K562 (cell line): ENCODE measurements at regions of chr15 and their contacts with region 1.

Region 1: GRCh38 chr15:84826369-84826823 is 9.2 kb downstream of the ALPK3 start:
- DNase-seq: peak; percentile 66 to 75 (median 71)
- ATAC-seq: peak; percentile 91
- H3K4me3 ChIP-seq: no peak overlapping the region
- H3K27ac ChIP-seq: no peak overlapping the region
- H3K4me1 ChIP-seq: peaks cover 11 to 26% of the 10 kb centered on the region in 2 experiments; a peak in 3 of 5 replicates
- H3K27me3 ChIP-seq: no peaks in the 10 kb centered on the region
- CTCF ChIP-seq: peak; percentile 88 to 89 (median 88)
- EP300 ChIP-seq: peak; percentile 6; the same call in 1 of the 2 replicates
- POLR2A ChIP-seq: no peak
- RAD21 ChIP-seq: peak; percentile 74 to 94

Region 2: DNA sequence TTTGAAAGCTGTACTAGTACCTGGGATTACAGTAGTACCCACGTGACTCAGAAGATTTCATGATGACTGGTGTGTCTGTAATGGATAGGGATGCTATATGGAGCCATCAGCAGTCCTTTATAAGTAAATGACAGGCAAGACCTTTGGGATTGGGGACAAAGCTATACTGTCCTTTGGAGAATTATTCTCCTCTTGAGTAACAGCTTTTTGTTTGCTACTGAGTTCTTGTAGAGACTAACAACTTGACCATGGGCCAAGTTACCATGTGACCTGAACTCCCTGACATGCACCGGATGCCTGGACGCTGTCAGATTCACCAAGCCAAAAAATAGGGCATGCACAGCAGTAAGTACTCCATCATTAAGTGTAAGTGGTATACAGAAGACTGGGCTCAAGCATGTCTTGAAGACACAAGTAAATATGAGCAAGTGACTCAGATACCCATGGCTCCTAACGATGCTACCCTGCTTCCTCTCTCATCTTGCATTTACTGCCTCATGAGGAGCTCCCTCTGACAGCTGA is 123.4 kb before region 1 on chr15:
- CTCF ChIA-PET with region 1: no interaction called
- POLR2A ChIA-PET with region 1: no interaction called
- in situ Hi-C with region 1: no loop called
- intact Hi-C with region 1: no loop called
- DNase-seq: no peak
- ATAC-seq: peak; percentile 14
- H3K4me3 ChIP-seq: no peak overlapping the region
- H3K27ac ChIP-seq: no peak overlapping the region
- H3K4me1 ChIP-seq: no peaks in the 10 kb centered on the region
- H3K27me3 ChIP-seq: no peaks in the 10 kb centered on the region
- CTCF ChIP-seq: no peak
- EP300 ChIP-seq: no peak
- POLR2A ChIP-seq: no peak
- RAD21 ChIP-seq: no peak

Region 3: GRCh38 chr15:84839689-84840654 is 13.6 kb after region 1 on chr15:
- CTCF ChIA-PET with region 1: no interaction called
- POLR2A ChIA-PET with region 1: interaction called, 12 read pairs
- in situ Hi-C with region 1: no loop called
- intact Hi-C with region 1: no loop called
- DNase-seq: no peak
- ATAC-seq: no peak
- H3K4me3 ChIP-seq: no peak overlapping the region
- H3K27ac ChIP-seq: no peak overlapping the region
- H3K4me1 ChIP-seq: peaks cover 6 to 17% of the 10 kb centered on the region in 2 experiments; a peak in 4 of 5 replicates
- H3K27me3 ChIP-seq: peaks cover 4 to 8% of the 10 kb centered on the region in 2 experiments; a peak in 4 of 5 replicates
- CTCF ChIP-seq: no peak
- EP300 ChIP-seq: no peak
- POLR2A ChIP-seq: no peak
- RAD21 ChIP-seq: no peak

Region 4: GRCh38 chr15:84871428-84872305 is 45.3 kb after region 1 on chr15:
- CTCF ChIA-PET with region 1: interaction called, 3 read pairs
- POLR2A ChIA-PET with region 1: interaction called, 4 read pairs
- in situ Hi-C with region 1: no loop called
- intact Hi-C with region 1: loop called (anchors 2 kb)
- DNase-seq: peak in 3 of 4 experiments; percentile 35 to 48 (median 43)
- ATAC-seq: peak; percentile 80
- H3K4me3 ChIP-seq: no peak overlapping the region
- H3K27ac ChIP-seq: no peak overlapping the region
- H3K4me1 ChIP-seq: no peaks in the 10 kb centered on the region; a peak in 1 of 5 replicates
- H3K27me3 ChIP-seq: peaks cover 20 to 52% of the 10 kb centered on the region in 2 experiments
- CTCF ChIP-seq: peak; percentile 67 to 70 (median 70)
- EP300 ChIP-seq: no peak
- POLR2A ChIP-seq: no peak
- RAD21 ChIP-seq: peak; percentile 34 to 65

Region 5: DNA sequence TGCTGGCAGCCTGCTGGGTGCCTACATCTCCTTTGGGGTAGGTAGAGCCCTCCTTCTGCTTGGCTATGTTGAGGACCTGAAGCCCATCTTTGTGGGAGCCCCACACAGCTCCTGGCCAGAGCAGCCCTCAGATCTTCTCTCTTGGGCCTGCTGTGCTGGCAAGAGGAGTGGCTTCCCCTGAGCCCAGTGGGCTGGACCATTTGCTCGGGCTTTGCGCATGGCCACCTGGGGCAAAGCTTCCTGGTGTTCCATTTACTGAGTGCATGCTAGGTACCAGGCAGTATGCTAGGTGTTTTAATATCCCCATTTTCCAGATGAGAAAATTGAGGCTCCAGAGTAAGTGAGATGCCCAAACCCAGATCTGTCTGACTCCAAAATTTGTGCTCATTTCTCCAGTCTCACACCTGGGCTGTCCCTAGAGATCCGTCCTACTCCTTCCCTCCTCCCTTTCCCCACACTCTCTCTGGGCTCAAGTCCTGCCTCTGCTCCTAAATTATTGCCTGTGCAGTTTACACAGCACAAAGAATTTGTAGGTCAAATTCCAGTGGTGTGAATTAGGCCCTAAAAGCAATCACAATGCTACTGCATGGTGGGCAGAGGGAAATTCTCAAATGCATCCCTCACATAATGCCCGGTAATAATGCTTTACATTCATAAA is 97.8 kb after region 1 on chr15:
- CTCF ChIA-PET with region 1: interaction called, 3 read pairs
- POLR2A ChIA-PET with region 1: no interaction called
- in situ Hi-C with region 1: no loop called
- intact Hi-C with region 1: loop called (anchors 2 kb)
- DNase-seq: no peak
- ATAC-seq: no peak
- H3K4me3 ChIP-seq: no peak overlapping the region
- H3K27ac ChIP-seq: no peak overlapping the region
- H3K4me1 ChIP-seq: peaks cover 6 to 10% of the 10 kb centered on the region in 2 experiments; a peak in 4 of 5 replicates
- H3K27me3 ChIP-seq: no peaks in the 10 kb centered on the region
- CTCF ChIP-seq: no peak
- EP300 ChIP-seq: no peak
- POLR2A ChIP-seq: no peak
- RAD21 ChIP-seq: no peak

Region 6: GRCh38 chr15:85010386-85011159 is 184.2 kb after region 1 on chr15:
- CTCF ChIA-PET with region 1: interaction called, 4 read pairs
- POLR2A ChIA-PET with region 1: no interaction called
- in situ Hi-C with region 1: no loop called
- intact Hi-C with region 1: loop called (anchors 10 kb)
- DNase-seq: peak in 3 of 4 experiments; percentile 30 to 68 (median 57)
- ATAC-seq: peak; percentile 79
- H3K4me3 ChIP-seq: no peak overlapping the region
- H3K27ac ChIP-seq: peak overlapping the region; percentile 53
- H3K4me1 ChIP-seq: peaks cover 11 to 41% of the 10 kb centered on the region in 2 experiments
- H3K27me3 ChIP-seq: no peaks in the 10 kb centered on the region
- CTCF ChIP-seq: peak; percentile 38 to 59 (median 54); a peak in 5 of 6 replicates
- EP300 ChIP-seq: no peak
- POLR2A ChIP-seq: no peak
- RAD21 ChIP-seq: peak; percentile 44 to 72

Region 7: DNA sequence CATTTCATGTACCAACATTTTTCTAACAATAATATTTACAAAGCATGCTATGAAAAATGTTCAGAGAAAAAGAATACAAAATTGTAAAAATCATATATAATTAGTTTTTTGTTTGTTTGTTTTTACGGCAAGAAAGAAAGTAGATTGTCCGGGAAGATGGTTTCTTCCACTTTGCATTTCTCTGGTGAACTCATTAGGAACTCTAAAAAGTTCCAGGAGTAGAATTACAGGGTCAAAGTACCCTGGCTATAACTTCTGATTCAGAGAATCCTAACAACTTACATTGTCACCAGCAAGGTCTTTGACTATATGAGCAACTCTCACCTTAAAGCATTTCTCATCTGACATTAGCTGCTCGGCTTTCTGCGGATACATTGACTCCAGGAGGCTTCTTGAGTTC is 351.9 kb after region 1 on chr15:
- CTCF ChIA-PET with region 1: no interaction called
- POLR2A ChIA-PET with region 1: no interaction called
- in situ Hi-C with region 1: no loop called
- intact Hi-C with region 1: no loop called
- DNase-seq: no peak
- ATAC-seq: no peak
- H3K4me3 ChIP-seq: no peak overlapping the region
- H3K27ac ChIP-seq: no peak overlapping the region
- H3K4me1 ChIP-seq: peaks cover 0 to 4% of the 10 kb centered on the region in 2 experiments; a peak in 2 of 5 replicates
- H3K27me3 ChIP-seq: no peaks in the 10 kb centered on the region
- CTCF ChIP-seq: no peak
- EP300 ChIP-seq: no peak
- POLR2A ChIP-seq: no peak
- RAD21 ChIP-seq: no peak